ENCODE measurements at regions of chr17 and their contacts with region 1.

Region 1: DNA sequence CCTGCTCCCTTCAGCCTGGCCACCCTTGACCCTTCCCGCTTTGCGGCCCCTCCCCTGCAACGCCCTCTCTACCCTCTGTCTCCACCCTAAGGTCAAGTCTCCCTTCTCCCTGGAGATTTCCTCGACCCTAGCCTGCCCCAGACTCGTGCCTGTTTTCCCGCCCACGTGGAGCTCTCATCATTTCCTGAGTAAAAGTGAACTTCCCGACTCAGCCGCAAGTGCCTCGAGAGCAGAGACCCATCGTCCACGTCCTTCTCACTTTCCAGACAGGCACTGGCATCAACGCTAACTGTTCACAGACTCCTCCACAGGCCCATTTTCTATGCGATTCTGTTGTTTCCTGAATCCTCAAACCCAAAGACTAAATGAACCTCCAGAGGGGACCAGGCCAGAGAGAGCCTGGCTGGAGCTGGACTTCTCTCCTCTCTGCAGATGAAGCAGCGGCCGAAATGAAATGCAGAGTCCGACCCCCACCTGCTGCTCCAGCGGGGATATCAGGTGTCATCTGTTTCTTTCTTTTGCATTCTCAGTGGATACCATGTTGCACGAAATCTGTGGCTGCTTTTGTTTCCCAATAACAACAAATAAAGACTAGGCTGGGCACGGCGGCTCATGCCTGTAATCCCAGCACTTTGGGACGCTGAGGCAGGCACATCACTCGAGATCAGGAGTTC is 52.5 kb downstream of the RTN4RL1 start:
- DNase-seq: peak in 2 of 5 donors; percentile 39 to 51
- ATAC-seq: peak in 3 of 4 donors; percentile 20 to 53 (median 21)
- H3K4me3 ChIP-seq: no peak overlapping the region
- H3K27ac ChIP-seq: no peak overlapping the region
- H3K4me1 ChIP-seq: peaks cover 0 to 24% (median 8%) of the 10 kb centered on the region in 12 donors
- H3K27me3 ChIP-seq: peaks cover 0 to 21% (median 5%) of the 10 kb centered on the region in 9 donors
- CTCF ChIP-seq: no peak
- POLR2A ChIP-seq: no peak

Region 2: DNA sequence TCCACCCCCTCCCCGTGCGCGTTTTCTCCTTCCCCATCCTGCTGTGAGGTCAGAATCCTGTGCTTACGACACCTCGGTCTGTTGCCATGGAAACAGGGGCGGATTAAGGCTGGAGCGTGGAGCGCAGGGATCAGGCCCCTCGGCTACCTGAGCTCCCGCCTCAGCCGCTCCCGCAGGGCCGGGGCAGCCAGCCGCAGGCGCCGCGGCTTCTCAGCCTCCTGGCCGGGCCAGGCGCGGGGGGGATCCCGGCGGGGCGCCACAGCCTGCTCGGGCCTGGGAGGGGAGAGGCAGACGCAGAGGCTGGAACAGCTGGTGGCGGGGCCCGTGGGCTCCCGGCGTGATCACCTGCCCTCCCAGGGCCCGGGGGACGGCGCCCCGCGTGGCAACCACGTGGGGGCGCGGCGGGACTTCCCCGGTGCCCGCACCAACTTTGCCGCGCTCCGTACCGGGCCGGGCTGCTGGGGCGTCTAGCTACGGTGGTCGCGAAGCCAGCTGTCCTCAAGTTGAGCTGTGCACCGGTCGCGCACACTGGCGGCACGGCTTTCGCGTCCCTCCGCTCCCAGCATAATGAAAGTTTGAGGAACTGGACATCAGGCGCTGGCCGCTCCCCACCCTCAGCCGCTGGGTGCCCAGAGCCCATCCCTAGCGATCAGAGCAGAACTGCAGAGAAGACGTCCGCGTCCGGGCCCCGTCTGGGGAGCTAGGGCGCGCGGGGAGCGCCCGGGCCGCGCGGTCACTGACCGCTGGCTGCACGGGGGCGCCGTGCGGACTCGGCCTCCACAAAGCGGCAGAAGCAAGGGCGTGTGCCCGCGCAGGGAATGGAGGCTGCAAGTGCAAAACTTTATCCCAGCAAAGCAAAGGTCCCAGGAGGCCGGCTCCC is 51.3 kb after region 1 on chr17:
- intact Hi-C with region 1: loop called in 2 of 10 experiments (anchors 5 kb)
- DNase-seq: peak in 1 of 5 donors; percentile 57
- ATAC-seq: peak in 2 of 4 donors; percentile 4 to 13
- H3K4me3 ChIP-seq: peak overlapping the region; percentile 35 to 85 (median 62)
- H3K27ac ChIP-seq: peak overlapping the region in 2 of 12 donors; percentile 79 to 88
- H3K4me1 ChIP-seq: peaks cover 3 to 43% (median 26%) of the 10 kb centered on the region in 12 donors
- H3K27me3 ChIP-seq: peaks cover 0 to 47% (median 0%) of the 10 kb centered on the region in 9 donors
- CTCF ChIP-seq: peak in 1 of 12 donors; percentile 2
- POLR2A ChIP-seq: no peak

Measured in heart left ventricle (tissue), 16 donors.